Heart right ventricle (tissue), 16 donors: ENCODE measurements at regions of chr7 and their contacts with region 1.

Region 1: DNA sequence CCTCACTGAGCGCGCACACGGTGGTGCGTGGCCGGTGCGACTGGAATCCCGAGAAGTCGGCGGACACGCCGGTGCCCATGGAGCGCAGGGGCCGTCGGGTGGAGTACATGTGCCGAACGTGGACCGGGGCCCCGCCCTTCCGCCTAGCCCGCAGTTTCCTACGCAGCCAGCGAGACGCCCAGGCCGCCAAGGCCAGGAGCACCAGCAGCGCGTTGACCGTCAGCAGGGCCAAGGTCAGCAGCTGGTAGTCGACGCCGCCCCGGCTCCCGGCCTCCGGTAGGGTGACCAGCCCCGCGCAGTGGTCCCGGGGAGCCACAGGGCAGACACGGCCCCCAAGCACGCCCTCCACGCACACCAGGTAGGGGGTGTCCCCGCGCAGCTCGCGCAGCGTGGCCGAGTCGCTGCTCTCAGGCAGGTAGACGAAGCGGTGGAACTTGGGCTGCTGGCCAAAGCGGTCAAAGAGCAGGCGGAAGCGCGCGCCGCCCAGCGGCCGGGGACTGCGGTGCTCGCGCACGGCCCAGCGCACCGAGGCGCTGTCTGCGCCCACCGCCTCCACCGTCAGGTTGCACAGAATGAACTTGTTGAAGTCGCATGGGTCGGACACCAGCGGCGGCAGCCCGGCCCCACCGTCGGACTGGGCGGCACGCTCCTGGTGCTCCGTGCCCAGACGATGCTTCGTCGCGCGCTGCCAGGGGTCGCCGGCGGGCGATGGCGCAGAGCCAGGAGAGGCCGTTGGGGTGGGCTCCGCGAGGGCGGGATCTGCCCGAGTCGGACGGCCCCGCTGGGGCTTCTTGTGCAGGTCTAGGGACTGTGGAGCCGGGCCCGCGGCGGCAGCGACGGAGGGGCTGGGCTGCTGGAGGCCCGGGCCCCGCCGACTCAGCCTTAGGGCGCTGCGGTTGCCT is 2.2 kb downstream of the TRIL start:
- DNase-seq: peak; percentile 73 to 85
- ATAC-seq: peak; percentile 37 to 80 (median 48)
- H3K4me3 ChIP-seq: peak overlapping the region; percentile 49 to 69 (median 62)
- H3K27ac ChIP-seq: peak overlapping the region; percentile 5 to 83 (median 60)
- H3K4me1 ChIP-seq: peaks cover 12 to 64% (median 46%) of the 10 kb centered on the region in 9 donors
- H3K27me3 ChIP-seq: peaks cover 0 to 60% (median 0%) of the 10 kb centered on the region in 7 donors
- CTCF ChIP-seq: peak; percentile 51 to 81 (median 58)

Region 2: GRCh38 chr7:28921822-28922221 is 34.1 kb before region 1 on chr7:
- intact Hi-C with region 1: loop called in 4 of 10 experiments (anchors 2 kb)
- DNase-seq: peak in 1 of 2 donors; percentile 58
- ATAC-seq: peak; percentile 85 to 95 (median 93)
- H3K4me3 ChIP-seq: peak overlapping the region in 1 of 10 donors; percentile 6
- H3K27ac ChIP-seq: no peak overlapping the region
- H3K4me1 ChIP-seq: peaks cover 0 to 27% (median 12%) of the 10 kb centered on the region in 9 donors
- H3K27me3 ChIP-seq: peaks cover 0 to 4% (median 0%) of the 10 kb centered on the region in 7 donors
- CTCF ChIP-seq: peak; percentile 81 to 90 (median 85)

Region 3: DNA sequence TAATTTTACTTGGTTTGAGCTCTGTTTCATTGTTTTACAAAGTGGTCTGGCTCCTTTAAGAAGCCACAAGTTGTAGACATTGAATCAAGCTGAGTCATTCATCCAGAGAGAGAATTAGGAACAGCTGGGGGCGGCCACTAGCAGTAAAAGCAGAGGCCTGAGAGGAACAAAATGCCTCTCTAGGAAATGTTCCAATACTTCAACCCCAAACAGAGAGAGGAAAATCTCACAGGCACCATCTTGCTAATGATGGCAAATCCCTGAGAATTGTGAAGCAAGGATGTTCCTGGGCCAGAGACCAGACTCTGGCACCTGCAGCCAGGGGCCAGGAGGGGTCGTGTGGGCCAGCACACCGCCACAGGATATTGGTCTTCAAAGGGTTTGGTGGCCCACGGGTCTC is 28.7 kb after region 1 on chr7:
- intact Hi-C with region 1: loop called in 1 of 10 experiments (anchors 2 kb)
- DNase-seq: peak in 1 of 2 donors; percentile 40
- ATAC-seq: peak in 7 of 8 donors; percentile 36 to 59 (median 52)
- H3K4me3 ChIP-seq: no peak overlapping the region
- H3K27ac ChIP-seq: peak overlapping the region in 7 of 10 donors; percentile 14 to 77 (median 49)
- H3K4me1 ChIP-seq: peaks cover 0 to 60% (median 44%) of the 10 kb centered on the region in 9 donors
- H3K27me3 ChIP-seq: no peaks in the 10 kb centered on the region
- CTCF ChIP-seq: peak in 1 of 9 donors; percentile 6

Region 4: DNA sequence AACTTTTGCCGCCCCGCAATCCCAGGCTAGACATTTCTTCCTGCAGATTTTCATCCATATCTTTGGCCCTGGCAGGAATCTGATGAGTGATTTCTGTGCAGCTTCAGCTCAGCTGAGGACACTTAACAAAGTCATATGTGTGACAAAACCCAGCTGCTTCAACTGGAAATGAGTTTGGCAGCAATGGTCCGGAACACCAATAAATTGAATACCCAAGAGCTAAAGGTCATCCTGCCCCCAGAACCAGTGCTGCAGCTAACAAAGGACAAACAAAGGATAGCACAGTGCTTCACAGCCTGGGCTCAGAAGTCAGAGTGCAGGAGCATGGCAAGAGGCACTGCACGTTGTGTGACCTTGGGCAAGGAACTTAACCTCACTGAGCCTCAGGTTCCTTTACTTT is 42.1 kb after region 1 on chr7:
- intact Hi-C with region 1: loop called in 3 of 10 experiments (anchors 5 kb)
- DNase-seq: no peak
- ATAC-seq: peak; percentile 19 to 77 (median 47)
- H3K4me3 ChIP-seq: no peak overlapping the region
- H3K27ac ChIP-seq: peak overlapping the region in 8 of 10 donors; percentile 28 to 72 (median 53)
- H3K4me1 ChIP-seq: peaks cover 20 to 51% (median 28%) of the 10 kb centered on the region in 9 donors
- H3K27me3 ChIP-seq: no peaks in the 10 kb centered on the region
- CTCF ChIP-seq: no peak

Region 5: GRCh38 chr7:29091715-29092114 is 135.7 kb after region 1 on chr7:
- intact Hi-C with region 1: loop called in 1 of 10 experiments (anchors 5 kb)
- DNase-seq: no peak
- ATAC-seq: peak in 4 of 8 donors; percentile 38 to 72 (median 54)
- H3K4me3 ChIP-seq: peak overlapping the region in 9 of 10 donors; percentile 10 to 50 (median 38)
- H3K27ac ChIP-seq: peak overlapping the region in 9 of 10 donors; percentile 26 to 85 (median 67)
- H3K4me1 ChIP-seq: peaks cover 0 to 55% (median 38%) of the 10 kb centered on the region in 9 donors
- H3K27me3 ChIP-seq: no peaks in the 10 kb centered on the region
- CTCF ChIP-seq: peak in 1 of 9 donors; percentile 10

Region 6: GRCh38 chr7:30193336-30193943 is 1237.5 kb after region 1 on chr7:
- intact Hi-C with region 1: no loop called
- DNase-seq: no peak
- ATAC-seq: no peak
- H3K4me3 ChIP-seq: no peak overlapping the region
- H3K27ac ChIP-seq: no peak overlapping the region
- H3K4me1 ChIP-seq: no peaks in the 10 kb centered on the region
- H3K27me3 ChIP-seq: no peaks in the 10 kb centered on the region
- CTCF ChIP-seq: no peak